Panc1 (cell line): ENCODE measurements at regions of chr7 and their contacts with region 1.

Region 1: DNA sequence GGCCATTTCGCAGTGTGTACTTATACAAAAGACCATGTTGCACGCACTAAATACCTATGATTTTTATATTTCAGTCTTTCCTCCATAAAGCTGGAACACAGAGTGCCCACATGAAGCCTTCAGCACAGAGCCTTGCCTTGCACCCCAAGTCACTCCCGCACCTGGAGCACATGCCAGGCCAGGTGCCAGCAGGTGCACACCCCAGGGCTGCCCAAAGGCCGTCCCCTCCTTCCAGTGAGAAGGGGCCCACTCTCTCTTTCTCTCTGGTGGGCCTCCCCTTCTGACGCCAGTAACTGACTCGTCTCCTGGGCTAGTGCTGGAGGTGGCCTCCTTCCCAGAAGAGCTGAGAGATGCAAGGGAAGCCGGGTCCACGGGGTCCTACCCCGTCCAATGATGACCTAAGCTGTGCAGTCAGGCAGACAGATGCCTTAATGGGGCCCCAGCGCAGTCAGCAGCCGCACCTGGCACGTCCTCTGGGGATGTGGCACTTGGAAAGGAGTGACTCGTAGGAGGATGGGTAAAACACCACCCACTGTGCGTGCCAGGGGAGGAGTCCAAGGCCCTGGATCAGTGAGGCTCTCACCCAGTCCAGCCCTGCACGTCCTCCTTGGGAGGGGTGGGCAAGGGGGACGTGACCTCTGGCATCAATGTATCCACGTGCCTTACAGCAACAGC is 17.7 kb upstream of the SHH start:
- DNase-seq: no peak
- ATAC-seq: no peak
- H3K4me3 ChIP-seq: no peak overlapping the region
- H3K27ac ChIP-seq: no peak overlapping the region
- H3K4me1 ChIP-seq: peaks cover 3% of the 10 kb centered on the region
- H3K27me3 ChIP-seq: no peaks in the 10 kb centered on the region
- CTCF ChIP-seq: no peak

Region 2: GRCh38 chr7:155885167-155886155 is 55.5 kb after region 1 on chr7:
- CTCF ChIA-PET with region 1: no interaction called
- POLR2A ChIA-PET with region 1: interaction called, 19 read pairs
- in situ Hi-C with region 1: no loop called
- intact Hi-C with region 1: no loop called
- DNase-seq: no peak
- ATAC-seq: peak; percentile 82
- H3K4me3 ChIP-seq: no peak overlapping the region
- H3K27ac ChIP-seq: peak overlapping the region; percentile 29; the same call in 1 of the 2 replicates
- H3K4me1 ChIP-seq: peaks cover 4% of the 10 kb centered on the region; the same call in 1 of the 2 replicates
- H3K27me3 ChIP-seq: no peaks in the 10 kb centered on the region
- CTCF ChIP-seq: no peak

Region 3: GRCh38 chr7:156816943-156817572 is 987.1 kb after region 1 on chr7:
- CTCF ChIA-PET with region 1: no interaction called
- POLR2A ChIA-PET with region 1: interaction called, 13 read pairs
- in situ Hi-C with region 1: no loop called
- intact Hi-C with region 1: no loop called
- DNase-seq: no peak
- ATAC-seq: no peak
- H3K4me3 ChIP-seq: no peak overlapping the region
- H3K27ac ChIP-seq: no peak overlapping the region
- H3K4me1 ChIP-seq: no peaks in the 10 kb centered on the region; the same call in 1 of the 2 replicates
- H3K27me3 ChIP-seq: no peaks in the 10 kb centered on the region
- CTCF ChIP-seq: peak; percentile 51; the same call in 1 of the 2 replicates